ENCODE measurements at regions of chr6 and their contacts with region 1.

Region 1: GRCh38 chr6:21593412-21593926 is at the start of gene SOX4:
- DNase-seq: peak; percentile 95
- H3K4me3 ChIP-seq: peak within 1 kb of the TSS; percentile 85 to 98 (median 97)
- H3K27ac ChIP-seq: peak within 1 kb of the TSS; percentile 64
- H3K4me1 ChIP-seq: peaks cover 13% of the 10 kb centered on the region
- H3K27me3 ChIP-seq: no peaks in the 10 kb centered on the region
- CTCF ChIP-seq: no peak
- total RNA-seq, gene SOX4: 22.3 to 64.8 TPM

Region 2: GRCh38 chr6:20789162-20789561 is 804.3 kb before region 1 on chr6:
- CTCF ChIA-PET with region 1: no interaction called
- dilution Hi-C with region 1: no loop called
- in situ Hi-C with region 1: no loop called
- intact Hi-C with region 1: loop called (anchors 1 kb)
- DNase-seq: no peak
- H3K4me3 ChIP-seq: no peak overlapping the region
- H3K27ac ChIP-seq: no peak overlapping the region
- H3K4me1 ChIP-seq: no peaks in the 10 kb centered on the region
- H3K27me3 ChIP-seq: no peaks in the 10 kb centered on the region
- CTCF ChIP-seq: peak in 1 of 2 donors; percentile 44

Region 3: DNA sequence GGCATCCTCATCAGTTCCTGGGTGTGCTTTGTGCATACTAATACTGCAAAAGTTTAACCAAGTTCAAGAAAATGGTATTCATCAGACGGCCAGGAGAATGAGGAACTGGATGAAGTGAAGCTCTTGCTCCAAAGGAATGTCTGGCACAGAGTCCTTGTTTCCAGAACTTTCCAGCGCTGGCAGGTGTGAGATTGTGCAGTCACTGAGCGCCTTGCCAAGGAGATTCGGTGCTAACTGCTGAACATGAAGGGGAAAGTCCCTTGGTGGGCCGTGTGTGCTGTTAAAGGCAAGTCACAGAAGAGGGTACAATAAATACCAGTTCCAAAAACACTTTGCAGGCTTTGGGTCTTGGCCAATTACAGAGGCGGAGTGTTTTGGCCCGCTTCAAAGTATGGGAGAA is 262.2 kb before region 1 on chr6:
- CTCF ChIA-PET with region 1: no interaction called
- dilution Hi-C with region 1: no loop called
- in situ Hi-C with region 1: no loop called
- intact Hi-C with region 1: loop called (anchors 1 kb)
- DNase-seq: no peak
- H3K4me3 ChIP-seq: no peak overlapping the region
- H3K27ac ChIP-seq: no peak overlapping the region
- H3K4me1 ChIP-seq: no peaks in the 10 kb centered on the region
- H3K27me3 ChIP-seq: peaks cover 2% of the 10 kb centered on the region
- CTCF ChIP-seq: no peak

Region 4: GRCh38 chr6:21869085-21869771 is 275.8 kb after region 1 on chr6:
- CTCF ChIA-PET with region 1: no interaction called
- dilution Hi-C with region 1: no loop called
- in situ Hi-C with region 1: no loop called
- intact Hi-C with region 1: loop called (anchors 1 kb)
- DNase-seq: peak; percentile 97
- H3K4me3 ChIP-seq: no peak overlapping the region
- H3K27ac ChIP-seq: peak overlapping the region; percentile 62
- H3K4me1 ChIP-seq: peaks cover 28% of the 10 kb centered on the region
- H3K27me3 ChIP-seq: no peaks in the 10 kb centered on the region
- CTCF ChIP-seq: no peak

Region 5: DNA sequence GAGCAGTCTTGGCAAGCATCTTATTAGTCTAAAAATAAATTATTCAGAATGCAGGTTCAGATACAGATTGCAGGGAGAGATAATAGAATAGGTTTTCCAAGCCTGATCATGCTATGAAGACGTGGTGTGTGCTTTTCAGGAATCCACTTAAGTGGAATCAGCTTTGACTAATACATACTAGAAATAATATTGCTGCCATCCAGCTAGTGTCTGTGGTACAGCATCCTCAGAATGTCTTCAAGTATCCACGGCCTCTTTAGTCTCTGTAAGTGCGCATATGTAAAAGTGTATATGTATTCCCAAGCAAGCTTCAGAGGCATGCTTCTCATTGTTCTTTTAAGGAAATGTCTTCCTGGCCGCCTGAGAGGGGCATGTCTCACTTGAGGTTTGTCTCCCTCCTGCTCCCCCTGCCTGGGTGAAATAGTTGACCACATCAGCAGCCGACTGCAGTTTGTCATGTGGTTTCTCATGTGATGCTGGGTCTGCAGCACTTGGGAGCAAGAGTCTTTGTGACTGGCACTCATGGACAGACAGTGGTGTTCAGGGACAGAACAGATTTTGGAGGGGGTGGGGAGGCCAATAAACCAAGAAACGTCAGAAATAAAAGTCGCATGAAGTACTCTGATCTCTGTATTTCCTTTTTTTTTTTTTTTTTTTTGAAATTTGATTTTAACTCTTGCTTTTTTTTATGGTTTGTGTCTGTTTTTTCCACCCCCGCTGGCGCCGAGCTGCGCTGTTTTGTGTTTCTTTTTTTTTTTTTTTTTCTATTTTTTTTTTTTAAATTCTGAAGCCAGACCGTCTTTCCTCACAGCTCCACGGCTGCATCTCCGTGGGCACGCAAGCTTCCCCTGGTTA is 552.6 kb after region 1 on chr6:
- CTCF ChIA-PET with region 1: no interaction called
- dilution Hi-C with region 1: no loop called
- in situ Hi-C with region 1: no loop called
- intact Hi-C with region 1: loop called (anchors 1 kb)
- DNase-seq: peak; percentile 17
- H3K4me3 ChIP-seq: no peak overlapping the region
- H3K27ac ChIP-seq: no peak overlapping the region
- H3K4me1 ChIP-seq: peaks cover 5% of the 10 kb centered on the region
- H3K27me3 ChIP-seq: no peaks in the 10 kb centered on the region
- CTCF ChIP-seq: peak in 1 of 2 donors; percentile 42

Region 6: GRCh38 chr6:22471132-22471690 is 877.7 kb after region 1 on chr6:
- CTCF ChIA-PET with region 1: interaction called, 4 read pairs
- dilution Hi-C with region 1: no loop called
- in situ Hi-C with region 1: no loop called
- intact Hi-C with region 1: loop called (anchors 10 kb)
- DNase-seq: peak; percentile 43
- H3K4me3 ChIP-seq: no peak overlapping the region
- H3K27ac ChIP-seq: no peak overlapping the region
- H3K4me1 ChIP-seq: no peaks in the 10 kb centered on the region
- H3K27me3 ChIP-seq: no peaks in the 10 kb centered on the region
- CTCF ChIP-seq: peak; percentile 6 to 44

Region 7: GRCh38 chr6:23446394-23447046 is 1853.1 kb after region 1 on chr6:
- CTCF ChIA-PET with region 1: interaction called, 3 read pairs
- dilution Hi-C with region 1: no loop called
- in situ Hi-C with region 1: no loop called
- intact Hi-C with region 1: loop called (anchors 10 kb)
- DNase-seq: peak; percentile 34
- H3K4me3 ChIP-seq: no peak overlapping the region
- H3K27ac ChIP-seq: no peak overlapping the region
- H3K4me1 ChIP-seq: no peaks in the 10 kb centered on the region
- H3K27me3 ChIP-seq: no peaks in the 10 kb centered on the region
- CTCF ChIP-seq: peak; percentile 31 to 55

Measured in mammary epithelial cell (primary cell).